ENCODE measurements at regions of chr11 and their contacts with region 1.

Region 1: GRCh38 chr11:17960091-17960490 is 52.8 kb downstream of the SERGEF start:
- DNase-seq: no peak
- ATAC-seq: no peak
- H3K4me3 ChIP-seq: no peak overlapping the region
- H3K27ac ChIP-seq: no peak overlapping the region
- H3K4me1 ChIP-seq: peaks cover 0 to 4% (median under 1%) of the 10 kb centered on the region in 9 donors
- H3K27me3 ChIP-seq: no peaks in the 10 kb centered on the region
- CTCF ChIP-seq: no peak

Region 2: DNA sequence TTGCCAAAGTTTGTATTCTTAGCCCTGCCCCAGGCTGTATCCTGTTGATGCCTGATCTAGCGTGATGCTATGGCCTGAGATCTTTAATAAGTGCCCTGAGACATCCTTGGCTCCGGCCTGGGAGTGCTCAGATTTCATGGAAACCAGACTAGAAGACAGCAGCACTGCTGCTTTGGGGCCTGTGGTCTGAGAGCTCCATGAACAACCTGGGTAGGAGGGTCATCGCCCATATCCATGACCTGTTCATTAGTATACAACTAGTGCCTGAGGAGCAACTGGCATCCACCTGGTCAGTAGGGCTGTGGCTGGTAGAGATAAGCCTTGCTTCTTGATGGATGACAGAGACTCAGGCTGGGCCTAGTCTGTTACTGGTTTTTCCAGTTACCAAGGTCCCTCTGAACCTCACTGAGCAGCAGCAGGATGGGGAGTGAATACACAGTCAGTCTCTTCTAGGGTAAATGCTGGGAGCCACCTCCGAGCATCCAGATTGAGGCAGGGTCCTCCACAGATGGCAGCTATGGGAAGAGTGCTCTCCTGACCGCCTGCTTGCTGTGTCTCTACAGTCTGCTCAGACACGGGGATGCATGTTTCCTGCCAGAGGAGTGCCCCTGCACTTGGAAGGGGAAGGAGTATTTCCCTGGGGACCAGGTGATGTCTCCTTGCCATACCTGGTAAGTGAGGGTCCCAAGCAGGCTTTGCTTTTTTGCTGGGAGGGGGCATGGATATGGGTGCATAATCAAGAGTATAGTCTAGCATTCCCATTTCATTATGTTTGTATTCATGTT is 374.0 kb before region 1 on chr11:
- intact Hi-C with region 1: no loop called
- DNase-seq: no peak
- ATAC-seq: no peak
- H3K4me3 ChIP-seq: no peak overlapping the region
- H3K27ac ChIP-seq: no peak overlapping the region
- H3K4me1 ChIP-seq: no peaks in the 10 kb centered on the region
- H3K27me3 ChIP-seq: peaks cover 0 to 6% (median under 1%) of the 10 kb centered on the region in 7 donors
- CTCF ChIP-seq: no peak

Region 3: DNA sequence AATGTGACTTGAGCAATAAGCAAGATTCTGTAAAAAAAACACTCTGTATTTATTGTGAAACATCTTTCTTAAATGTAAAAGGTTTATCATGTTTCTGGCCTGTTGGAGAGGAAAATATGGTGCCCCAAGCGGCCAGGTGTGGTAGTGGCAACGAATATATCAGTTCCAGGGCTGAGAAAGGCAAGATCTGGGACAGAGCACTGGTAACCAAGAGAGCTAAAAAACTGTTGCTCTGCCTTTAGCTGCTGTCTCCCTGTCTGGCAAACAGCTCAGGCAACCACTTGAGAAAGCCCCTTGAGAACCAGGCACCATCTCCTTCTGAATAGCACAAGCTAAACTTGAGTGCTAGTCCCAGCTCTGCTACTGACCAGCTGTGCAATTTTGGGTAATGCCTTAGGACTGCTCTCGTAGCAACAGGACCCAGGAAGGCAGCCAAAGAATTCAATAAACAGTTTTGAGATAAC is 95.6 kb before region 1 on chr11:
- intact Hi-C with region 1: loop called in 1 of 10 experiments (anchors 10 kb)
- DNase-seq: no peak
- ATAC-seq: no peak
- H3K4me3 ChIP-seq: no peak overlapping the region
- H3K27ac ChIP-seq: no peak overlapping the region
- H3K4me1 ChIP-seq: peaks cover 0 to 31% (median 4%) of the 10 kb centered on the region in 9 donors
- H3K27me3 ChIP-seq: no peaks in the 10 kb centered on the region
- CTCF ChIP-seq: peak in 6 of 9 donors; percentile 13 to 34 (median 20)

Region 4: GRCh38 chr11:17927681-17928347 is 32.3 kb before region 1 on chr11:
- intact Hi-C with region 1: loop called in 1 of 10 experiments (anchors 5 kb)
- DNase-seq: no peak
- ATAC-seq: no peak
- H3K4me3 ChIP-seq: no peak overlapping the region
- H3K27ac ChIP-seq: no peak overlapping the region
- H3K4me1 ChIP-seq: peaks cover 0 to 16% (median 10%) of the 10 kb centered on the region in 9 donors
- H3K27me3 ChIP-seq: no peaks in the 10 kb centered on the region
- CTCF ChIP-seq: no peak

Measured in heart right ventricle (tissue), 16 donors.